Natural killer cell (primary cell): ENCODE measurements at regions of chr13 and their contacts with region 1.

Region 1: GRCh38 chr13:39037880-39038568 is at the starts of genes NHLRC3 and PROSER1:
- DNase-seq: peak; percentile 75 to 92
- ATAC-seq: peak; percentile 77 to 91 (median 80)
- H3K4me3 ChIP-seq: peak within 1 kb of the TSS; percentile 60
- H3K4me3 Mint-ChIP-seq: peak within 1 kb of the TSS; percentile 93
- H3K27ac ChIP-seq: peak within 1 kb of the TSS; percentile 92
- H3K27ac Mint-ChIP-seq: peak within 1 kb of the TSS; percentile 96
- H3K4me1 ChIP-seq: peaks cover 4% of the 10 kb centered on the region
- H3K4me1 Mint-ChIP-seq: peaks cover 59 to 72% of the 10 kb centered on the region in 2 donors
- H3K27me3 ChIP-seq: no peaks in the 10 kb centered on the region
- H3K27me3 Mint-ChIP-seq: no peaks in the 10 kb centered on the region
- CTCF ChIP-seq: no peak
- total RNA-seq, gene NHLRC3: 26.0 to 36.8 (median 28.3) TPM
- total RNA-seq, gene PROSER1: 58.6 to 70.2 (median 61.7) TPM

Region 2: GRCh38 chr13:38349390-38350113 is 688.5 kb before region 1 on chr13 and contains the start of gene UFM1:
- intact Hi-C with region 1: loop called (anchors 5 kb)
- DNase-seq: peak; percentile 75 to 95
- ATAC-seq: peak; percentile 93 to 98 (median 94)
- H3K4me3 ChIP-seq: peak within 1 kb of the TSS; percentile 87
- H3K4me3 Mint-ChIP-seq: peak within 1 kb of the TSS; percentile 98
- H3K27ac ChIP-seq: peak within 1 kb of the TSS; percentile 87
- H3K27ac Mint-ChIP-seq: peak within 1 kb of the TSS; percentile 98
- H3K4me1 ChIP-seq: peaks cover 8% of the 10 kb centered on the region
- H3K4me1 Mint-ChIP-seq: peaks cover 38 to 42% of the 10 kb centered on the region in 2 donors
- H3K27me3 ChIP-seq: no peaks in the 10 kb centered on the region
- H3K27me3 Mint-ChIP-seq: peaks cover 8 to 9% of the 10 kb centered on the region in 2 donors
- CTCF ChIP-seq: no peak
- total RNA-seq, gene UFM1: 76.3 to 84.3 (median 84.1) TPM

Region 3: DNA sequence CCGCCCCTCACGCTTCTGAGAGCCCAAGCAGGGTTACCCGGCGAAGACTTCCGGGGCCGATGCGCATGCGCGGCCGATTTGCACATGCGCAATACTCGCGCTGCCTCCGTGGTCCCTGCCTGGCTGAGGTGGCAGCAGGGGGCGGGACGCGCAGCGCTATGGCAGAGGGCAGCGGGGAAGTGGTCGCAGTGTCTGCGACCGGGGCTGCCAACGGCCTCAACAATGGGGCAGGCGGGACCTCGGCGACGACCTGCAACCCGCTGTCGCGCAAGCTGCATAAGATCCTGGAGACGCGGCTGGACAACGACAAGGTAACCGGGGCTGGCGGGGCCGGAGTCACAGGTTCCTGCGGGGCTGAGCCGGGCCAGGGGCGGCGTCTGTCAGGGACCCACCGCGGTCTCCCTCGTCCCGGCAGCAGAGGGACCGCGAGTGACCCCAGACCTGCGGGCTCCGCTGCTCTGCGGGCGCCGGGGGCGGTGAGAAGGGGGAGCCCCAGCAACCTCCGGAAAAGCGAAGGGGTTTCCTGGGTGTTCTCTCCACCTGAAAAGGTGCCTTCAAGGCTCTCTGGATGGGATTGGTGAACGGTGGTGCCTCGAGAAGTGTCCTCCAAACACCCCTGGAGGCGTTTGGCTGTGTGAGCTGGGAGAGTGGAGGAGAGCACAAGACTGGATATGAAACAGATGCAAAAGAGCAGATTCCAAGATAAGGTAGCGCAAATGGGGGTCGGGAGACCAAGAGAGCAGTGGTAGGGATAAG is 617.7 kb after region 1 on chr13 and contains the start of gene COG6:
- intact Hi-C with region 1: loop called (anchors 10 kb)
- DNase-seq: peak; percentile 96 to 97
- ATAC-seq: peak; percentile 92 to 93 (median 92)
- H3K4me3 ChIP-seq: peak within 1 kb of the TSS; percentile 75
- H3K4me3 Mint-ChIP-seq: peak within 1 kb of the TSS; percentile 98
- H3K27ac ChIP-seq: peak within 1 kb of the TSS; percentile 55
- H3K27ac Mint-ChIP-seq: peak within 1 kb of the TSS; percentile 95 to 97
- H3K4me1 ChIP-seq: peaks cover 10% of the 10 kb centered on the region
- H3K4me1 Mint-ChIP-seq: peaks cover 28 to 34% of the 10 kb centered on the region in 2 donors
- H3K27me3 ChIP-seq: no peaks in the 10 kb centered on the region
- H3K27me3 Mint-ChIP-seq: peaks cover 7 to 20% of the 10 kb centered on the region in 2 donors
- CTCF ChIP-seq: no peak
- total RNA-seq, gene COG6: 30.2 to 36.0 (median 32.3) TPM